Activated CD4-positive, alpha-beta memory T cell treated with anti-CD3 and anti-CD28 coated beads for 36 hours (primary cell): ENCODE measurements at regions of chr2 and their contacts with region 1.

Region 1: GRCh38 chr2:24971536-24972314 is at the start of gene DNAJC27:
- DNase-seq: peak; percentile 98
- H3K4me3 Mint-ChIP-seq: peak within 1 kb of the TSS; percentile 96
- H3K27ac Mint-ChIP-seq: peak within 1 kb of the TSS; percentile 100
- H3K4me1 Mint-ChIP-seq: peaks cover 6% of the 10 kb centered on the region
- H3K27me3 Mint-ChIP-seq: no peaks in the 10 kb centered on the region
- total RNA-seq, gene DNAJC27: 5.5 to 6.9 TPM

Region 2: DNA sequence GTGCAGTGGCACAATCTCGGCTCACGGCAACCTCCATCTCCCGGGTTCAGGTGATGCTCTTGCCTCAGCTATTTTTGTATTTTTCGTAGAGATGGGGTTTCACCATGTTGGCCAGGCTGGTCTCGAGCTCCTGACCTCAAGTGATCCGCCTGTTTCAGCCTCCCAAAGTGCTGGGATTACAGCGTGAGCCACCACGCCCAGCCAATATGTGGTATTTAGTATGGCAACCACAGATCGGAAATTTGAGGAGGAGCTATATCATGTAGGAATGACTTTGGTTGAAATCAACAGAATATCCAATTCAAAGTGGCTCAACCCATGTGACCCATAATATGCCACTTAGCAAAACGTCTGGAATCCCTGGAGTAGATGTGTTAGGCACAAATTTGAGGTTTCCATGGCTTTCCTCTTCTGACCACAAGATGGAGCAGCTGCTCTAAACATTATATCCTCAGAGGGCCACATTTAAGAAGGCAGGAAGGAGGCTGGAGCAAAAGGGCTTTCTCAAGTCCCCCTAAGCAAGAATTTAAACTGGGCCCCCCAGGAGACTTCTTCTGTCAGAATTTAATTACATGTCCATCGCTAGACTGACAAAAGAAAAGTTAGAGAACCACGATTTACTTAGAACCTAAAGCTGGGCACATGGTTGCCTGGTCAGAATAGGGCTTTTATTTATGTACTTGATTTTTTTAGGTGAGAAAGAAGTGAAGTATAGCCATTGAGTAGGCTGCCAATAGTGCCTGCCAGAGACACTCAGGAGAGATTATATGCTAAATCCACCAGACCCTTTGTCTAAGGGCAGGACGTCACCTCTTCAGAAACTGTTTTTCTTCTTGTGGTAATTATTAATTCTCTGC is 561.8 kb before region 1 on chr2:
- CTCF ChIA-PET with region 1: interaction called, 7 read pairs
- POLR2A ChIA-PET with region 1: no interaction called
- intact Hi-C with region 1: loop called (anchors 5 kb)
- DNase-seq: peak; percentile 38
- H3K4me3 Mint-ChIP-seq: no peak overlapping the region
- H3K27ac Mint-ChIP-seq: no peak overlapping the region
- H3K4me1 Mint-ChIP-seq: no peaks in the 10 kb centered on the region
- H3K27me3 Mint-ChIP-seq: peaks cover 7% of the 10 kb centered on the region

Region 3: GRCh38 chr2:24792874-24793760 is 178.6 kb before region 1 on chr2 and contains the starts of genes CENPO and PTRHD1:
- CTCF ChIA-PET with region 1: interaction called, 3 read pairs
- POLR2A ChIA-PET with region 1: no interaction called
- intact Hi-C with region 1: loop called (anchors 2 kb)
- DNase-seq: peak; percentile 97
- H3K4me3 Mint-ChIP-seq: peak within 1 kb of the TSS; percentile 98
- H3K27ac Mint-ChIP-seq: peak within 1 kb of the TSS; percentile 100
- H3K4me1 Mint-ChIP-seq: peaks cover 35% of the 10 kb centered on the region
- H3K27me3 Mint-ChIP-seq: no peaks in the 10 kb centered on the region
- total RNA-seq, gene CENPO: 39.9 to 42.4 TPM
- total RNA-seq, gene PTRHD1: 19.2 to 20.3 TPM

Region 4: GRCh38 chr2:24984912-24985311 is 13.2 kb after region 1 on chr2:
- CTCF ChIA-PET with region 1: interaction called, 16 read pairs
- POLR2A ChIA-PET with region 1: no interaction called
- intact Hi-C with region 1: no loop called
- DNase-seq: no peak
- H3K4me3 Mint-ChIP-seq: no peak overlapping the region
- H3K27ac Mint-ChIP-seq: no peak overlapping the region
- H3K4me1 Mint-ChIP-seq: no peaks in the 10 kb centered on the region
- H3K27me3 Mint-ChIP-seq: peaks cover 1% of the 10 kb centered on the region

Region 5: DNA sequence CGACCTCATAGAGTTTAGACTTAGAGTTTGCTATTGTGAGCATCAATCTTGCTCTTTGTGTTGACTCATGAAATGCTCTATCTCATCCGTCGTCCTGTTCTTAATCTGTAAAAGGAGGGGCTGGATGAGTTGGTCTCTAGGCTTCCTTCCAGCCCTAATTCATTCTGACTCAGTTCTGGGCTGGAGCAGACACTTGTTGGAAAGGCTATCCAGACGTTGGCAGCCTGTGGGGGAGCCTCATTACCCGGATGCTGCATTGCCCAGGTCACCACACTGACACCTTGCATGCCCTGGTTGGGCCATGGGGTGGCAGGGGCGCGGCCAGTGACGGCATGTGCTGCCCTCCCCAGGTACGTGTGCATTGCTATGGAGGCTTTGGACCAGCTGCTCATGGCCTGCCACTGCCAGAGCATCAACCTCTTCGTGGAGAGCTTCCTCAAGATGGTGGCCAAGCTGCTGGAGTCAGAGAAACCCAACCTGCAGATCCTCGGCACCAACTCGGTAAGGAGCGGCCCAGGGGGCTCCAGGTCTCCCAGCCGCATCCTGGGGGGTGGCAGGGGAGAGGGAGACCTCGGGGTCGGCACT is 131.7 kb after region 1 on chr2:
- CTCF ChIA-PET with region 1: interaction called, 13 read pairs
- POLR2A ChIA-PET with region 1: no interaction called
- intact Hi-C with region 1: no loop called
- DNase-seq: no peak
- H3K4me3 Mint-ChIP-seq: no peak overlapping the region
- H3K27ac Mint-ChIP-seq: no peak overlapping the region
- H3K4me1 Mint-ChIP-seq: peaks cover 15% of the 10 kb centered on the region
- H3K27me3 Mint-ChIP-seq: peaks cover 3% of the 10 kb centered on the region

Region 6: DNA sequence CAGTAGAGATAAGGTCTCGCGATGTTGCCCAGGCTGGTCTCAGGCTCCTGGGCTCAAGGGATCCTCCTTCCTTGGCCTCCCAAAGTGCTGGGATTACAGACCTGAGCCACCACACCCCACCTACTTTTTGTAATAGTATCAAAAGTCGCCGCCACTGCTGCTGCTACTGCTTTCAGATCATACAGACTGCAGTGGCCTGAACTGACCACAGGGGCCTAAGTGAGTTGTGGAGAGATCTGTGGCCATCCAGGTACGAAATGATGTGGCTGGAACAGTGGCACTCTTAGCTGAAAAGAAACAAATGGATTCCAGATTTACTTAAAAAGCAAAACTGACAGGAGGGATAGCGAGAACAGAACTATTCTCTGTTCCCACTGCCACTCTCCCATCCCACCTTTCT is 229.5 kb after region 1 on chr2:
- CTCF ChIA-PET with region 1: interaction called, 33 read pairs
- POLR2A ChIA-PET with region 1: no interaction called
- intact Hi-C with region 1: loop called (anchors 1 kb)
- DNase-seq: no peak
- H3K4me3 Mint-ChIP-seq: no peak overlapping the region
- H3K27ac Mint-ChIP-seq: no peak overlapping the region
- H3K4me1 Mint-ChIP-seq: peaks cover 6% of the 10 kb centered on the region
- H3K27me3 Mint-ChIP-seq: no peaks in the 10 kb centered on the region